KBM-7 (cell line): ENCODE measurements at regions of chr11 and their contacts with region 1.

Region 1: DNA sequence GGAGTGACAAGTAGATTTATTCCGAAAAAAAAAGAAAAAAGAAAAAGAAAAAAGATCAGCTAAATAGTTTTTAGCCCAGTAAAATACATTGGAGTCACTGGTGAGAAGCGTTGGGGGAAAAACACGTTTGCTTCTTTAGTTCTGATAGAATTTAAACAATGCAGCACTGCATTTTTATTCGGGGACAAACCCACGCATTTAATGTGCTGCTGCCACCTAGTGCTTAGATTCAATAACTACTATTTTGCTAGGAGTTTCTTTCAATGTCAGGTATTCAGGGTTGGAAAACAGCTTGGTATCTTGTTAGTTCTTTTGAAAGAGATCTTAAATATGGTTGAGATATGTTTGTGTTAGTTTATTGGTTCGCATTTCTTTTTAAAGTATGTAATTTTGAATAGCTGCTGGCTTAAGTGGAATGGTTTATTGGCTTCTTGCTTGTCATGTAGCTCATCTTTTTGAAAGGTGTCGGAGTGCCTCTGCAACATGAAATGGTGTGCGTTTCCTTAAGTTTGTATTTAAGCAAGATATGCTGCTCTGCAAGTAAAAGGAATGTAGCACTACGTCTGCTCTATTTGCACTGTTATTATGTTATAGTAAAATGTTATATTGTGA is 41.9 kb downstream of the SVIP start:
- DNase-seq: peak; percentile 48

Region 2: GRCh38 chr11:22337596-22338485 is 449.8 kb before region 1 on chr11 and contains the start of gene SLC17A6:
- in situ Hi-C with region 1: loop called (anchors 25 kb)
- DNase-seq: peak; percentile 52